Stomach (tissue), 19 donors: ENCODE measurements at regions of chr16 and their contacts with region 1.

Region 1: GRCh38 chr16:4882633-4883285 is 35.5 kb downstream of the UBN1 start:
- DNase-seq: peak; percentile 61 to 69
- H3K4me3 ChIP-seq: no peak overlapping the region
- H3K27ac ChIP-seq: peak overlapping the region in 1 of 5 donors; percentile 43
- H3K4me1 ChIP-seq: peaks cover 0 to 17% (median 12%) of the 10 kb centered on the region in 4 donors
- H3K27me3 ChIP-seq: no peaks in the 10 kb centered on the region
- CTCF ChIP-seq: no peak
- EP300 ChIP-seq: no peak
- POLR2A ChIP-seq: no peak

Region 2: DNA sequence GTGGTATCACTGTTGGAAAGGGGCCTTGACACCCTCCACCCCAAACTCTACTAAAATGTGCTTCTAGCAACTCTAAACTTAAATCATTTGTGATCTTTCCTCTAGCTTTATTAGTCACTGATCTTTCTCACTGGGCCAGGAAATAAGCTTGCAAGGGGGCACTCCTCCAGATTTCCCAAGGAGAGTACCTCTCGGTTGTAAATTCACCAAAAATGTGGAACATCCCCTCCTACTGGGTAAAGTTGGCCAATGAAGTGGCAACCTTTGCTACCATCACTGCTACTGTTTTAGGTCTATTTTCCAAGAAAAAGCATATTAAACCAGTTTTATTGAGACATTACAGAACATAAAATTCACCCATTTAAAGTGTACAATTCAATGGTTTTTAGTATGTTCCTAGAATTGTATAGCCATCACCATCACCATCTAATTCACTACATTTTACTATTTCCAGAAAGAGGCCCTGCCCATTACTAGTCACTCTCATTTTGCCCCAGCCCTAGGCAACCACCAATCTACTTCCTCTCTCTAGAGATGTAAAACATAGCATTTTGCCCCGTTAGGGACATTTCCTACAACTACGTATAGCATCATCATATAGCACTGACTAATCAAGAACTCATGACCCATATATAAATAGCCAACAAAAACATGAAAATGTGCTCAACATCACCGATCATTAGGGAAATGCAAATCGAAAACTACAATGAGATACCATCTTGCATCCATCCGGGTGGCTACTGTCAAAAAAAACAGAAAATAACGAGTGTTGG is 721.9 kb before region 1 on chr16:
- intact Hi-C with region 1: no loop called
- DNase-seq: no peak
- H3K4me3 ChIP-seq: no peak overlapping the region
- H3K27ac ChIP-seq: no peak overlapping the region
- H3K4me1 ChIP-seq: no peaks in the 10 kb centered on the region
- H3K27me3 ChIP-seq: no peaks in the 10 kb centered on the region
- CTCF ChIP-seq: no peak
- EP300 ChIP-seq: no peak
- POLR2A ChIP-seq: no peak

Region 3: GRCh38 chr16:4936991-4937781 is 54.4 kb after region 1 on chr16 and contains the start of gene PPL:
- intact Hi-C with region 1: loop called (anchors 10 kb)
- DNase-seq: peak; percentile 97
- H3K4me3 ChIP-seq: peak within 1 kb of the TSS; percentile 59 to 79 (median 68)
- H3K27ac ChIP-seq: peak within 1 kb of the TSS; percentile 76 to 85 (median 79)
- H3K4me1 ChIP-seq: peaks cover 21 to 44% (median 33%) of the 10 kb centered on the region in 4 donors
- H3K27me3 ChIP-seq: peaks cover 0 to 39% (median 14%) of the 10 kb centered on the region in 3 donors
- CTCF ChIP-seq: no peak
- EP300 ChIP-seq: no peak
- POLR2A ChIP-seq: no peak
- total RNA-seq, gene PPL: 11.4 to 98.8 (median 31.6) TPM